ENCODE measurements at regions of chr12 and their contacts with region 1.

Region 1: DNA sequence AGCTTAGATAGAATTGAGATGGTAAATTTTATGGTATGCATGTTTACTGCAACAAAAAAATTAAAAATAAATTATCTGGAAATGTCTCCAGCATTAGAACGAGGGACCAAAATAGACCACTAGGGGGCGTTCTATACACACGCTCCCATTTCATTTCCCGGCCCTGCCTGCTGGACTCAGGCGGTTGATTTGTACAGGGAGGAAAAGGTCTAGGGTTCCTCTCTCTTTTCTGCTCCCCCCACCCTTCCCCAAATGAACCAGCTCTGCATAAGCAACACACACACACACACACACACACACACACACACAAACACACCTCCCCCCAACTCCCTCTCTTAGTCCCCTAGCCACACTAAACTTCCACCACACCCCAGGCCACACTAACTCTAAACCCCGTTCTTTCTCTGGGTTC is 7.8 kb upstream of the DTX1 start:
- DNase-seq: no peak
- H3K4me3 ChIP-seq: no peak overlapping the region
- H3K27me3 ChIP-seq: no peaks in the 10 kb centered on the region; the same call in 1 of the 2 replicates
- CTCF ChIP-seq: peak; percentile 80

Region 2: GRCh38 chr12:112924986-112925385 is 123.7 kb before region 1 on chr12:
- CTCF ChIA-PET with region 1: no interaction called
- POLR2A ChIA-PET with region 1: no interaction called
- DNase-seq: no peak
- H3K4me3 ChIP-seq: no peak overlapping the region
- H3K27me3 ChIP-seq: no peaks in the 10 kb centered on the region
- CTCF ChIP-seq: no peak

Region 3: DNA sequence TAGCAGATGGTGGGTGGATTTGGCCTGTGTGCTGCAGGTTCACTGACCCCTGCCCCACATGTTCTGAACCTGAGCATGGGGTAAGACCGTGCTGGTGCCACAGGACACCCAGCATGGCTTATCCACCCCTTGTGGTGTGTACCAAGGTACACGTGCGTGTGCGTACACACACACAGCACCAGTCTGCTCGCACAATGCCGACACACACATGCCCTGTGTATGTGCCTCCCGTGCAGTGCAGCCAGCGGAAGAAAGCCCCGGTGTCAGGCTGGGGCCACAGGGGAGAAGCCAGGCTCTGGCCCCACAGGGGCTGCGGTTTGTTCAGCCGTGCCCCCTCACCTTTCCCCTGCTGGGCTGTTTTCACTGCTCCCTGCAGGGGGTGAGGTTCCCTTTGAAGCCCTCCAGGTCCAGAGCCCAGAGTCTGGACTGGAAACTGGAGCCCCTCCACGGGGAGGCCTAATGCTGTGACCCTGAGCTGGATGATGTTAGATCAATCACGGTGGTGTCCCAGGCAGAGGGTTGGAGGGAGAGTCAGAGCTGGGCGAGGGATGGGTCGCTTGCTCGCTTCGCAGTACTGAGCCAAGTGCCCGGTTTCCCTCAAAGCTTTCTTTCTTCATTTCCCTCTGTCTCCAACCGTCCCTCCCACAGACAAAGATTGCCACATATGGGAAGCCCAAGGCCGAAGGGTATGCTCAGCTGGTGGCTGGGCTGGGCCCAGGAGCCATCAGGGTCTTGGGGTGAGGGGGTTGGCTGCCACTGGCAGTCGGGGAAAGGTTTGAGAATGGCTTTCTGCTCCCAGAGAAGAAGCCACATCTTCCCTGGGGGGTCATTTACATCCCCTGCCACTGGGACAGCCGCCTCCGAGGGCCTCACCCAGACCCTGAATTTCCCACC is 14.0 kb after region 1 on chr12:
- CTCF ChIA-PET with region 1: interaction called, 10 read pairs
- POLR2A ChIA-PET with region 1: no interaction called
- DNase-seq: no peak
- H3K4me3 ChIP-seq: no peak overlapping the region
- H3K27me3 ChIP-seq: peaks cover 1% of the 10 kb centered on the region
- CTCF ChIP-seq: no peak

Region 4: GRCh38 chr12:113152835-113153814 is 104.4 kb after region 1 on chr12:
- CTCF ChIA-PET with region 1: interaction called, 54 read pairs
- POLR2A ChIA-PET with region 1: interaction called, 6 read pairs
- DNase-seq: peak; percentile 10
- H3K4me3 ChIP-seq: peak overlapping the region; percentile 32
- H3K27me3 ChIP-seq: peaks cover 23% of the 10 kb centered on the region
- CTCF ChIP-seq: peak; percentile 59